Calu3 (cell line): ENCODE measurements at regions of chrX and their contacts with region 1.

Region 1: GRCh38 chrX:23008431-23009099 is 8.8 kb downstream of the DDX53 start:
- DNase-seq: peak; percentile 10
- H3K4me3 Mint-ChIP-seq: no peak overlapping the region
- H3K27ac Mint-ChIP-seq: no peak overlapping the region
- H3K4me1 Mint-ChIP-seq: no peaks in the 10 kb centered on the region
- H3K27me3 Mint-ChIP-seq: no peaks in the 10 kb centered on the region
- CTCF ChIP-seq: peak; percentile 25

Region 2: GRCh38 chrX:23554304-23554703 is 545.7 kb after region 1 on chrX:
- CTCF ChIA-PET with region 1: no interaction called
- intact Hi-C with region 1: loop called (anchors 2 kb)
- DNase-seq: peak; percentile 5
- H3K4me3 Mint-ChIP-seq: no peak overlapping the region
- H3K27ac Mint-ChIP-seq: no peak overlapping the region
- H3K4me1 Mint-ChIP-seq: no peaks in the 10 kb centered on the region
- H3K27me3 Mint-ChIP-seq: no peaks in the 10 kb centered on the region
- CTCF ChIP-seq: peak; percentile 22

Region 3: DNA sequence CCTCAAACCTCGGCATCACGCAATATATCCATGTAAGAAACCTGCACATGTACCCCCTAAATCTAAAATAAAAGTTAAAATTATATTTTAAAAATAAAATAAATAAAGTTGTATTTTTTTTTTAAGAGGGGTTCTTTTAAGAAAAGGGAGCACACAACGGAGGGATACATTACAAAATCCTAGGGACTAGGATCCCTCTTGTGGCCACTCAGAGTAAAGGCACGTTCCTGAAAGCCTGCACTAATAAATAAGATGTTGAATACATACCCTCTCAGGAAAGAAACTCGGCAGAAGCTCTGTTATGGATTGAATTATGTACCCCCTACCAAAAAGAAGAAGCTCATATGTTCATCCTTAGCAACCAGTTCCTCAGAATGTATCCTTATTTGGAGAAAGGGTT is 607.8 kb after region 1 on chrX:
- CTCF ChIA-PET with region 1: no interaction called
- intact Hi-C with region 1: loop called (anchors 10 kb)
- DNase-seq: no peak
- H3K4me3 Mint-ChIP-seq: no peak overlapping the region
- H3K27ac Mint-ChIP-seq: no peak overlapping the region
- H3K4me1 Mint-ChIP-seq: no peaks in the 10 kb centered on the region
- H3K27me3 Mint-ChIP-seq: peaks cover 20% of the 10 kb centered on the region
- CTCF ChIP-seq: peak; percentile 54